GM12878 (cell line): ENCODE measurements at regions of chr9 and their contacts with region 1.

Region 1: GRCh38 chr9:109934857-109935215 is 154.8 kb downstream of the PALM2AKAP2 start:
- DNase-seq: no peak
- ATAC-seq: no peak
- H3K4me3 ChIP-seq: no peak overlapping the region
- H3K27ac ChIP-seq: peak overlapping the region; percentile 17; the same call in 1 of the 2 replicates
- H3K4me1 ChIP-seq: peaks cover 23% of the 10 kb centered on the region
- H3K27me3 ChIP-seq: no peaks in the 10 kb centered on the region
- CTCF ChIP-seq: no peak
- EP300 ChIP-seq: no peak
- POLR2A ChIP-seq: no peak
- RAD21 ChIP-seq: no peak

Region 2: GRCh38 chr9:109918339-109919163 is 16.3 kb before region 1 on chr9:
- CTCF ChIA-PET with region 1: interaction called, 4 read pairs
- POLR2A ChIA-PET with region 1: interaction called, 3 read pairs
- RAD21 ChIA-PET with region 1: no interaction called
- SMC1A ChIA-PET with region 1: interaction called, 27 read pairs
- in situ Hi-C with region 1: no loop called
- intact Hi-C with region 1: no loop called
- DNase-seq: peak; percentile 80
- ATAC-seq: peak; percentile 73
- H3K4me3 ChIP-seq: peak overlapping the region; percentile 37; the same call in 1 of the 2 replicates
- H3K27ac ChIP-seq: peak overlapping the region; percentile 94
- H3K4me1 ChIP-seq: peaks cover 55% of the 10 kb centered on the region
- H3K27me3 ChIP-seq: no peaks in the 10 kb centered on the region
- CTCF ChIP-seq: no peak
- EP300 ChIP-seq: peak; percentile 71 to 92
- POLR2A ChIP-seq: no peak; the same call in none of the 2 replicates
- RAD21 ChIP-seq: peak; percentile 38; the same call in 1 of the 2 replicates

Region 3: DNA sequence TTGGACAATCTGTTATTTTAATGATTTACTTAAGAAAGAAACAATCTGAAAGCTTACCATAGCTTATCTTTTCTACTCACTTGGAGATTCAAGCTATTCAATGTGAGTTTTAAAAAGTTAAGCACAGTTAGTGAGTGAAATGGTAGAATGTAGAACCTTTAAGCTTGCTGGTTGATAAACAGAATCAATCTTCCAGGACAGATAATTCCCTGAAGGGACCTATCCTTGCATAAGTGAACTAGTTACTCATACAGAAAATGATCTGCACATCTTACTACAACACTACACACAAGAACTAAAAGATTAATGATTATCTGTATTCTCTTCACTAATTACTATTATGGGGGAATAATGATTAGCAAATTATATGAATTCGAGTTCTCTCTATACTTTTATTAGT is 10.7 kb after region 1 on chr9:
- CTCF ChIA-PET with region 1: interaction called, 11 read pairs
- POLR2A ChIA-PET with region 1: no interaction called
- RAD21 ChIA-PET with region 1: no interaction called
- SMC1A ChIA-PET with region 1: interaction called, 29 read pairs
- in situ Hi-C with region 1: no loop called
- intact Hi-C with region 1: no loop called
- DNase-seq: no peak
- ATAC-seq: no peak
- H3K4me3 ChIP-seq: no peak overlapping the region
- H3K27ac ChIP-seq: no peak overlapping the region
- H3K4me1 ChIP-seq: peaks cover 7% of the 10 kb centered on the region
- H3K27me3 ChIP-seq: no peaks in the 10 kb centered on the region
- CTCF ChIP-seq: no peak
- EP300 ChIP-seq: no peak
- POLR2A ChIP-seq: no peak
- RAD21 ChIP-seq: no peak

Region 4: DNA sequence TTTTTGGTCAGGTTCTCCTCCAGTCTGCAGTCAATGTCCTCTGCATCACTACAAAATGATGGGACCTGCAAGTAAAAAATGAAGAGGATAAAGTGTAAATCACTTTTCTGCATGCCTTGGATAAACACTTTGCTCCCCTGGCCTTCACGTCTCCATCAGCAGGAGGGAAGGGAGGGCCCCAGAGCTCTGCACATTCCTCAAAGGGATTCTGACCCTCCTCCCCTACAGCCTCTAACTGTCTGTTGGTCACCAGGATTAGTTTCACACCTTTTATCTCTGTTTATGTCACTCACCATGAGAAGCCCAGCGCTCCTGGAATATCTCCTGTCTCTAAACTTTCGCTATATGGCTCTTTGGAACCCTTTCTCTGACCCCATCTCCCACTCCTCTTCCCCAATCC is 541.4 kb after region 1 on chr9:
- CTCF ChIA-PET with region 1: no interaction called
- POLR2A ChIA-PET with region 1: no interaction called
- RAD21 ChIA-PET with region 1: no interaction called
- SMC1A ChIA-PET with region 1: no interaction called
- in situ Hi-C with region 1: no loop called
- intact Hi-C with region 1: no loop called
- DNase-seq: no peak
- ATAC-seq: no peak
- H3K4me3 ChIP-seq: no peak overlapping the region
- H3K27ac ChIP-seq: no peak overlapping the region
- H3K4me1 ChIP-seq: no peaks in the 10 kb centered on the region
- H3K27me3 ChIP-seq: no peaks in the 10 kb centered on the region
- CTCF ChIP-seq: no peak
- EP300 ChIP-seq: no peak
- POLR2A ChIP-seq: no peak
- RAD21 ChIP-seq: no peak